ENCODE measurements at regions of chr3 and their contacts with region 1.

Region 1: DNA sequence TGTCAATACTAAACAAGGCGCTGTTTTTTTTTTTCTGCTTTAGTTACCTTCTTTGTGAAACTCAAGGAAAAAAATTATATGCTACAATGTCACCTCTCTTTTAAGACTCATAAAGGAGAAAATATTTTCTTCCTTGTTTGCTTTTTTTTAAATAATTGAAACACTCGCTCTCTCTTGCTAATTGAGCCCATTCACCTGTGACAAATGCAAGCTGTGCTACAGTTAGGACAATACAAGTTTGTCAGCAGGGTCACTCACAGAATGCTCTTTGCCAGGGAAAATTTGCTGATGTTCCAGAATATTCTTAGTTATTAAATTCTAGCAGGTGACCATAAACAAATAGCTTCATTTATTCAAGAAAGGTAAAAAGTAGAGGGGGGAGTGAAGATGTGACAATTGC is 375.9 kb upstream of the DPPA4 start:
- DNase-seq: no peak
- H3K4me3 ChIP-seq: no peak overlapping the region
- H3K27ac ChIP-seq: no peak overlapping the region
- H3K4me1 ChIP-seq: no peaks in the 10 kb centered on the region
- H3K27me3 ChIP-seq: no peaks in the 10 kb centered on the region
- CTCF ChIP-seq: no peak

Region 2: GRCh38 chr3:109284071-109284470 is 429.2 kb before region 1 on chr3:
- CTCF ChIA-PET with region 1: no interaction called
- POLR2A ChIA-PET with region 1: no interaction called
- intact Hi-C with region 1: no loop called
- DNase-seq: no peak
- H3K4me3 ChIP-seq: no peak overlapping the region
- H3K27ac ChIP-seq: no peak overlapping the region
- H3K4me1 ChIP-seq: no peaks in the 10 kb centered on the region
- H3K27me3 ChIP-seq: no peaks in the 10 kb centered on the region
- CTCF ChIP-seq: no peak

Region 3: GRCh38 chr3:109743981-109744380 is 30.7 kb after region 1 on chr3:
- CTCF ChIA-PET with region 1: no interaction called
- POLR2A ChIA-PET with region 1: no interaction called
- intact Hi-C with region 1: loop called (anchors 2 kb)
- DNase-seq: no peak
- H3K4me3 ChIP-seq: no peak overlapping the region
- H3K27ac ChIP-seq: no peak overlapping the region
- H3K4me1 ChIP-seq: no peaks in the 10 kb centered on the region
- H3K27me3 ChIP-seq: no peaks in the 10 kb centered on the region
- CTCF ChIP-seq: no peak

Measured in A673 (cell line).